RWPE1 (cell line): ENCODE measurements at regions of chr6 and their contacts with region 1.

Region 1: GRCh38 chr6:136792410-136793262 is at the start of gene MAP3K5:
- DNase-seq: peak; percentile 65
- H3K27ac ChIP-seq: peak within 1 kb of the TSS; percentile 89
- CTCF ChIP-seq: peak; percentile 72

Region 2: GRCh38 chr6:136643850-136644596 is 148.6 kb before region 1 on chr6:
- CTCF ChIA-PET with region 1: interaction called, 117 read pairs
- POLR2A ChIA-PET with region 1: interaction called, 5 read pairs
- DNase-seq: peak; percentile 85
- H3K27ac ChIP-seq: peak overlapping the region; percentile 25
- CTCF ChIP-seq: peak; percentile 85

Region 3: GRCh38 chr6:136718476-136718875 is 74.2 kb before region 1 on chr6:
- CTCF ChIA-PET with region 1: interaction called, 10 read pairs
- POLR2A ChIA-PET with region 1: no interaction called
- DNase-seq: no peak
- H3K27ac ChIP-seq: no peak overlapping the region
- CTCF ChIP-seq: no peak